Activated naive CD8-positive, alpha-beta T cell treated with anti-CD3 and anti-CD28 coated beads, Interleukin-2, amount 10 ng/mL, durations not matched to agents 7 days and 5 days (primary cell): ENCODE measurements at regions of chr14 and their contacts with region 1.

Region 1: GRCh38 chr14:23057757-23058653 is 685 bp upstream of the CDH24 start:
- DNase-seq: peak; percentile 90
- ATAC-seq: peak; percentile 71
- H3K4me3 Mint-ChIP-seq: peak overlapping the region; percentile 81
- H3K27ac Mint-ChIP-seq: no peak overlapping the region
- H3K4me1 Mint-ChIP-seq: peaks cover 16% of the 10 kb centered on the region
- H3K27me3 Mint-ChIP-seq: peaks cover 8% of the 10 kb centered on the region

Region 2: GRCh38 chr14:22994762-22995275 is 63.2 kb before region 1 on chr14:
- POLR2A ChIA-PET with region 1: interaction called, 12 read pairs
- DNase-seq: no peak
- ATAC-seq: peak; percentile 88
- H3K4me3 Mint-ChIP-seq: no peak overlapping the region
- H3K27ac Mint-ChIP-seq: no peak overlapping the region
- H3K4me1 Mint-ChIP-seq: peaks cover 3% of the 10 kb centered on the region
- H3K27me3 Mint-ChIP-seq: no peaks in the 10 kb centered on the region